PC-9 (cell line): ENCODE measurements at regions of chr5 and their contacts with region 1.

Region 1: GRCh38 chr5:32916648-32917047 is 205.5 kb downstream of the NPR3 start:
- DNase-seq: peak in 1 of 2 experiments; percentile 65
- H3K4me3 ChIP-seq: no peak overlapping the region
- H3K27ac ChIP-seq: no peak overlapping the region
- H3K4me1 ChIP-seq: no peaks in the 10 kb centered on the region
- H3K27me3 ChIP-seq: no peaks in the 10 kb centered on the region
- CTCF ChIP-seq: peak; percentile 82

Region 2: GRCh38 chr5:32138839-32139493 is 777.7 kb before region 1 on chr5:
- CTCF ChIA-PET with region 1: interaction called, 17 read pairs
- POLR2A ChIA-PET with region 1: no interaction called
- intact Hi-C with region 1: no loop called
- DNase-seq: peak in 1 of 2 experiments; percentile 17
- H3K4me3 ChIP-seq: no peak overlapping the region
- H3K27ac ChIP-seq: no peak overlapping the region
- H3K4me1 ChIP-seq: no peaks in the 10 kb centered on the region
- H3K27me3 ChIP-seq: no peaks in the 10 kb centered on the region
- CTCF ChIP-seq: no peak

Region 3: GRCh38 chr5:32436553-32437242 is 479.9 kb before region 1 on chr5:
- CTCF ChIA-PET with region 1: no interaction called
- POLR2A ChIA-PET with region 1: no interaction called
- intact Hi-C with region 1: no loop called
- DNase-seq: no peak
- H3K4me3 ChIP-seq: no peak overlapping the region
- H3K27ac ChIP-seq: 0 out of 2 replicates have a peak overlapping the region, but pooled peaks have one; percentile 7
- H3K4me1 ChIP-seq: peaks cover 47% of the 10 kb centered on the region
- H3K27me3 ChIP-seq: no peaks in the 10 kb centered on the region
- CTCF ChIP-seq: no peak

Region 4: DNA sequence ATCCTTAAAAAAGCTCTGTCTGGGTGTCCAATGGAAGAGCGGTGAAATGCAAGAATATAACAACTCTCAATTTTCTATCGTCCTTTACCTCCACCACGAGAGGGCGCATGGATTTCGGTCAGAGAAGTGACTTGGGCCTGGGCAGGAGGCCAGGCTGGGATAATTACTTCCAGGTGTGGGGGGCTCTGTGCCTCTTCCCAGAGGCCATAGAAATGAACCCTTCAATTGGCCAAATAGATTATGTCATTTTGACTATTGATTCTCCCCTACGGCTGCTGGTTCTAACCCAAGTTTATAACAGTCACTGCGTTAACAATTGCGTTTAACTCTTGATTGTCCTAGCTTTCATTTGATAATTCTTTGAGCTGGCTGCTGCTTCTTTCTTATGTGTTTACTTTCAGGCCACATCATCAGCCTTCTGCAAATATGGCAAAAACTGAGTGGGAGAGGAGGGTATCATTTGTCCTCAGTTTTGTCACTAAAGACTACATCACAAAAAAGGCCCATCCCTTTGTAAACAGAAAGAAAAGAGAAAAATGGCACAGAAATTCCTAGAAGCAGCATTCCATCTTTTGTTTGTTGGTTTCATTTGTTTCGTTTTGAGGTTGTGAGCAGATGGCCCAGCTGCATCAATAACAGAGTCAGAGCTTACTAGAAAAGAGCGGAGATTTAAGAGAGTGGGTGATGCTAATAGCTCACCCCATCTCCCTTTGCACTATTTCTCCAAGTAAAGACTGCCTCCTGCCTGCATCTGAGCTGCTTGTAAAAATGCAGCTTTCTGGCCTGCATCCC is 426.7 kb before region 1 on chr5:
- CTCF ChIA-PET with region 1: no interaction called
- POLR2A ChIA-PET with region 1: no interaction called
- intact Hi-C with region 1: loop called (anchors 1 kb)
- DNase-seq: peak; percentile 58 to 67
- H3K4me3 ChIP-seq: no peak overlapping the region
- H3K27ac ChIP-seq: no peak overlapping the region
- H3K4me1 ChIP-seq: no peaks in the 10 kb centered on the region
- H3K27me3 ChIP-seq: no peaks in the 10 kb centered on the region
- CTCF ChIP-seq: peak; percentile 92

Region 5: DNA sequence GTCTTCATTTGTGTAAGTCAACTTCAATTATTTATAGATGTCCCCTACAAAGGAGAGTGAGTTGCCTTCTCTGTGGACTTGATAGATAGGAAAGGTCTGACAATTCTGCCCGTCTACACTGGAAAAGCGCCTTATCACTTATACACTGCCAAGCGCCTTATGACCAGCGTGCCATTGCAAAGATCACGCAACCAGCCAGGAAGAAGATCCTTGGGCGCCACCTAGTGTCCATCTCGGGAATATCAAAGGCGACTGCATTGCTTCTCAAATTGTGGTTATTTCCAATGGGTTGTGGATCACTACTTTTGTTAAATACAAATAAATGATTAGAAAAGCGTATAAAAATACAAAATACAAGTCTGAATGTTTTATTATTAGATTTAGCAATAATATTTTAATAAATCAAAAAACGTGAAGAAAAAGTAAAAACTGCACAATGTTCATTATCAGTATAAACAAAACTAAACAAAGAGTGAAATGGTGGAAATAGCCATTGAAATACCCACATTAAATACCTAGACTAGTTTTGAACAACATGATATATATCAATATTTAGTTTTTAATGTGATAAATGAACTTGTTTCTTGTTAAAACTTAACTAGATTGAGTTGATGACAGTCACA is 303.5 kb before region 1 on chr5:
- CTCF ChIA-PET with region 1: no interaction called
- POLR2A ChIA-PET with region 1: no interaction called
- intact Hi-C with region 1: loop called (anchors 1 kb)
- DNase-seq: peak; percentile 62 to 86
- H3K4me3 ChIP-seq: no peak overlapping the region
- H3K27ac ChIP-seq: no peak overlapping the region
- H3K4me1 ChIP-seq: no peaks in the 10 kb centered on the region
- H3K27me3 ChIP-seq: no peaks in the 10 kb centered on the region
- CTCF ChIP-seq: peak; percentile 100

Region 6: GRCh38 chr5:32942225-32942989 is 25.8 kb after region 1 on chr5:
- CTCF ChIA-PET with region 1: no interaction called
- POLR2A ChIA-PET with region 1: no interaction called
- intact Hi-C with region 1: no loop called
- DNase-seq: no peak
- H3K4me3 ChIP-seq: no peak overlapping the region
- H3K27ac ChIP-seq: no peak overlapping the region
- H3K4me1 ChIP-seq: no peaks in the 10 kb centered on the region
- H3K27me3 ChIP-seq: no peaks in the 10 kb centered on the region
- CTCF ChIP-seq: peak; percentile 80

Region 7: GRCh38 chr5:33299621-33300208 is 383.1 kb after region 1 on chr5:
- CTCF ChIA-PET with region 1: no interaction called
- POLR2A ChIA-PET with region 1: no interaction called
- intact Hi-C with region 1: loop called (anchors 1 kb)
- DNase-seq: peak in 1 of 2 experiments; percentile 37
- H3K4me3 ChIP-seq: no peak overlapping the region
- H3K27ac ChIP-seq: no peak overlapping the region
- H3K4me1 ChIP-seq: no peaks in the 10 kb centered on the region; the same call in 1 of the 2 replicates
- H3K27me3 ChIP-seq: no peaks in the 10 kb centered on the region
- CTCF ChIP-seq: peak; percentile 77

Region 8: GRCh38 chr5:33423018-33423630 is 506.5 kb after region 1 on chr5:
- CTCF ChIA-PET with region 1: no interaction called
- POLR2A ChIA-PET with region 1: no interaction called
- intact Hi-C with region 1: loop called (anchors 5 kb)
- DNase-seq: no peak
- H3K4me3 ChIP-seq: no peak overlapping the region
- H3K27ac ChIP-seq: no peak overlapping the region
- H3K4me1 ChIP-seq: no peaks in the 10 kb centered on the region
- H3K27me3 ChIP-seq: no peaks in the 10 kb centered on the region
- CTCF ChIP-seq: peak; percentile 84

Region 9: DNA sequence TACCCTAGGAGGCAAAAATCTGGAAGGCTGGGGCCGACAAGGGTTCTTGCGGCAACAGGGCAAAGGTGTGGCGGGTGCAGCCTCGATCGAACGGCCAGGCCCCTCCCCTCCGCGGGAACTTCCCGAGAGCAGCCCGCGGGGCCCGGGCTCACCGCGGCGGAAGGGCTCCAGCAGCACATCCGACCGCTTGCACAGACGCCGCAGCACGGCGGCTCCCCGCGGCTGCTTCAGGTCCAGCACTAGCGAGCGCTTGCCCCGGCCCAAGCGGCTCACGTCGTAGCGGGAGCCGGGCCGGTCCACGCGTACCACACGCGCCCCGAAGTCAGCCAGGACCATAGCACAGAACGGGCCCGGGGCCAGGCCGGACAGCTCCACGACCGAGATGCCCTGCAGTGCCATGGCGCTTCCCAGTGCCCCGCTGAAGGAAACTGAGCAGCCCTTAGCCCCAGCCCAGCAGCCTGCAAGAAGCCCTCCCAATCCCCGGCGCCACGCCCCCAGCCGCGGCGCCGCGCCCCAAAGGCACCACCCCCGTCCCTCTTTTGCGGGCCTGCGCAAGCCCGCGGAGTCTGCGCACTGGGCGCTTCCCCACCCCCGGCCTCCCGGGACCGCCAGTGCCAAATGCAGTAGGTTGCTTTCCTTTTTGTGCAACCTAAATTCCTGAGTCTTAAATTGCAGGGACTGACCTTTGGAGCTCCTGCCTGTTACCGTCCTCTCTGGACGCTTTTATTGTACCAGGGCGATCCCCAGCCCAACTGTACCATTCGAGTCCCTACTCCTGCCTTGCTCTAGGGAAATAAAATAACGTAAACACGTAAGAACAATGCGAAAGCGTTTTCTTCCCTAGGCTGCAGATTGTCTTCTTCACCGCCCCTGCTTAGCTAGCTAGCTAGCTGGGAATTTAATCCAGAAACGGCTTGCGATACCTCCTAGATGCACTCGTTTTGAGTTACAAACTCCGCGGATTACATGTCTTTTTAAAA is 1091.3 kb after region 1 on chr5 and contains the start of gene AMACR:
- CTCF ChIA-PET with region 1: no interaction called
- POLR2A ChIA-PET with region 1: interaction called, 16 read pairs
- intact Hi-C with region 1: no loop called
- DNase-seq: peak; percentile 90 to 100
- H3K4me3 ChIP-seq: peak within 1 kb of the TSS; percentile 82
- H3K27ac ChIP-seq: peak within 1 kb of the TSS; percentile 50
- H3K4me1 ChIP-seq: peaks cover 26% of the 10 kb centered on the region
- H3K27me3 ChIP-seq: no peaks in the 10 kb centered on the region
- CTCF ChIP-seq: no peak
- total RNA-seq, gene AMACR: 31.1 and 31.2 TPM in 2 replicates